Heart left ventricle (tissue), 16 donors: ENCODE measurements at regions of chr3 and their contacts with region 1.

Region 1: DNA sequence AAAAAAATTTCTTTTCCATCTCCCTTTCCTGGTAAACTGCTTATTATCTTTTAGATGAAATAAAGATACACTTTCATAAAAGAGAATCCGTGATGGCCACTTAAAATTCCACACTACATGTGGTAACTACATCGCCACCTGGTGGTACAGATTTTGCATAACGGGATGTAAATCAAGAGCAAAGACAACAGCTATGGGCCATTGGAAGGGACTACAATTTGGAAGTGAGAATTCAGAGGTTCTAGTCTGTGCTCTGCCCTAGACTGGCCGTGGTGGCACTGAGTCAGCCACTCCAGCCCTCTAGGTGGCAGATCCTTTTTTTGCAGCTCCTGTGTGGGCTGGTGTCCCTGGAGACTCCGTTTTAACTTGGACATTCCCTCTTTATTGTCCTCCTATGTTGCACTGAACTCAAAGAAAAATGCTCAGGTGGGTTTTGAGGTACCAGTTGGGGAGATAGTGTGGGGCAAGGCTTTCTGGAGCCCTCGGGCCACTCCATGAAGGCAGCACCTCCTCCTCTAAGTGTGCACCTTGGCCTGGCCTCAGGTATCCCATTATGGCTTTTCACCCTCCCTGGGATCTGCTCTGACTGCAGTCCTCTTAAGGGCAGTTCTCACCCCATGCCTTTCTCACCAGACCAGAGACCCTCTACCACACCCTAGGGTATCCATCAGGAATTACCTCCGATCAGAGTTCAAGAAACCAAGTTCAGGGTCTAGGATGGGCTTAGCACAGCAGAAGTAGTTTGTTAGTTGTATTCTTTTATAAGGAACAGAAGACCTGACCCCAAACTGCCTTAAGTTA is 54.9 kb downstream of the SPSB4 start:
- DNase-seq: peak in 3 of 5 donors; percentile 71 to 74 (median 72)
- ATAC-seq: no peak
- H3K4me3 ChIP-seq: no peak overlapping the region
- H3K27ac ChIP-seq: no peak overlapping the region
- H3K4me1 ChIP-seq: peaks cover 0 to 31% (median 6%) of the 10 kb centered on the region in 12 donors
- H3K27me3 ChIP-seq: no peaks in the 10 kb centered on the region
- CTCF ChIP-seq: peak; percentile 65 to 83 (median 78)
- POLR2A ChIP-seq: no peak

Region 2: GRCh38 chr3:140898340-140899180 is 207.5 kb before region 1 on chr3:
- intact Hi-C with region 1: loop called in 2 of 10 experiments (anchors 2 to 10 kb)
- DNase-seq: no peak
- ATAC-seq: peak; percentile 23 to 53 (median 36)
- H3K4me3 ChIP-seq: no peak overlapping the region
- H3K27ac ChIP-seq: no peak overlapping the region
- H3K4me1 ChIP-seq: peaks cover 0 to 5% (median 0%) of the 10 kb centered on the region in 12 donors
- H3K27me3 ChIP-seq: no peaks in the 10 kb centered on the region
- CTCF ChIP-seq: peak; percentile 33 to 63 (median 48)
- POLR2A ChIP-seq: no peak

Region 3: GRCh38 chr3:141000027-141000663 is 105.9 kb before region 1 on chr3:
- intact Hi-C with region 1: loop called in 1 of 10 experiments (anchors 5 kb)
- DNase-seq: peak; percentile 58 to 77 (median 68)
- ATAC-seq: peak; percentile 93 to 99 (median 96)
- H3K4me3 ChIP-seq: no peak overlapping the region
- H3K27ac ChIP-seq: no peak overlapping the region
- H3K4me1 ChIP-seq: no peaks in the 10 kb centered on the region
- H3K27me3 ChIP-seq: no peaks in the 10 kb centered on the region
- CTCF ChIP-seq: peak; percentile 59 to 83 (median 76)
- POLR2A ChIP-seq: no peak

Region 4: DNA sequence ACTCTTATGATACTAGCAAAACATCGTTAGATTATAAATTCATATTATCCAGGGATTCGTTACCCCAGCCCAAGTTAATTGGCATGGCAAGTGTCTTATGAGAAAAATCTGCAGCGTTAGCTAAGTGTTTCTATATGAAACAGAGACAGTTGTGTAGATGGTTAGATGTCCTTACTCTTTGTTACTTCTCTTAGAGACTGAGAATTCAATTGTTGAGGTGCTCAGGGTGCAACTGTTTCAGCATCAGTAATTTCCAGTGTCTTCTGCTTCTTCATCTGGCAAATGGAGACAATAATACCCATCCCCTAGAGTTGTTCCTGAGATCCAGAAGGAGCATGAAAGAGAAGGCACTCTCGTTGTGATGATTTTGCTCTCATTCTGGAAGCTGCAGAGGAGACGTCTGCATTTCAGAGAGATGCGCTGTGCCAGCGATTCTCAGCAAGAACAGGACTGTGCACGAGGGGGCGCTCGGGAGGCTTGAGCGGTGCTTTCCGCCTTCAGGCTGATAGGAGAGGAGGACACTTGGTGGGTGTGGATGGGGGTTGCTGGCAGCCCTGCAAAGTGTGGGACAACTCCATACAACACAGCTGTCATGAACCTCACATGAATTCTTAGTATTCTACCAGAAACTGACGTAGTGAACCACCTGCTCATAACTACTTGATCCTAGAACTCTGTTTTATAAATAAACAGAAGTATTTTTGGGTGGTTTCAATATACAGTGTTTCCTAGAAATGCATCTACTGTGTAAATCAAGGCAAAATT is 94.6 kb before region 1 on chr3:
- intact Hi-C with region 1: loop called in 9 of 10 experiments (anchors 1 to 5 kb)
- DNase-seq: peak; percentile 76 to 89 (median 82)
- ATAC-seq: peak; percentile 62 to 84 (median 76)
- H3K4me3 ChIP-seq: no peak overlapping the region
- H3K27ac ChIP-seq: no peak overlapping the region
- H3K4me1 ChIP-seq: peaks cover 0 to 6% (median 1%) of the 10 kb centered on the region in 12 donors
- H3K27me3 ChIP-seq: no peaks in the 10 kb centered on the region
- CTCF ChIP-seq: peak; percentile 57 to 87 (median 80)
- POLR2A ChIP-seq: no peak

Region 5: DNA sequence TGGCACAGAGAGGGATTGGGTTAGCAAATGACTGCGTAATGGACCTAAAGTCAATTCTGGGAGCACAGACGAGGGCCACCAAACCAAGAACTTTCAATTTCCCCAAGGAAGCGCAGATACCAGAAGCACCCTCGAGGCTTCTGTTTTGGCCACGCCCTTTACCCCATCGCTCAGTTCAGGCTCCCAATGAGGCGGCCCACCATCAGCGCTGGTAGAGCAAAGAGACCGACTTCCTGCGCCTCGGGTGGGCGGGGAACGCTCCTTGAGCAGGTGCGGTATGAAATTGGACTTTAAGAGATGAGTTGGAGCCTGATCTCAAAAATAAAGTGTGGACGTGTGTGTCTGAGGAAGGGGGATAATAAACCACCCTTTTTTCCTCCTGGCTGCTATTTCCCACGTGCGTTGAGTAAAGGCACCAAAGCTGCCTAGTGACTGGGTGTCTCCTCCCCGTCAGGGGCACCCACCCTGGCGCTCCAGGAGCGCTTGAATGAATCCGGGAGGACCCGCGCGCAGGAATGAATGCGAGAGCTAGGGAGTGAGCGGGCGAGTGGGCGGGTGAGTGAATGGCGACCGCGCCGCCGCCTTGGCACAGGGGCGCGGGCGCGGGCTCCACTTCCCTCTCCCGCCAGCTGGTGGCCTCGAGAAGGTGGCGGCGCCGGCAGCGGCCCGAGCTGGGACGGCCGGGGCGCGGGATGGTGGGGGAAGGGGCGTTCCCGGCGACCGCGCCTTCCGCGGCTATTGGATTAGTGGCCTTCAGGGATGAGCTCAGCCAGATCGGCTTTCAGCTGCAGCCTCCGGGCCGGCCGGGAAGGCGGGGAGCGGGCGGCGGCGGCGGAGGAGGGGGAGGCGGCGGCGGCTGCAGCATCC is 55.2 kb before region 1 on chr3 and contains the start of gene SPSB4:
- intact Hi-C with region 1: loop called (anchors 2 to 10 kb)
- DNase-seq: peak; percentile 75 to 88 (median 79)
- ATAC-seq: peak; percentile 77 to 92 (median 90)
- H3K4me3 ChIP-seq: peak within 1 kb of the TSS; percentile 52 to 72 (median 58)
- H3K27ac ChIP-seq: peak within 1 kb of the TSS; percentile 30 to 85 (median 72)
- H3K4me1 ChIP-seq: peaks cover 0 to 34% (median 8%) of the 10 kb centered on the region in 12 donors
- H3K27me3 ChIP-seq: peaks cover 0 to 45% (median 0%) of the 10 kb centered on the region in 9 donors
- CTCF ChIP-seq: peak; percentile 16 to 64 (median 46)
- POLR2A ChIP-seq: no peak
- total RNA-seq, gene SPSB4: 3.7 to 11.1 (median 4.8) TPM

Region 6: DNA sequence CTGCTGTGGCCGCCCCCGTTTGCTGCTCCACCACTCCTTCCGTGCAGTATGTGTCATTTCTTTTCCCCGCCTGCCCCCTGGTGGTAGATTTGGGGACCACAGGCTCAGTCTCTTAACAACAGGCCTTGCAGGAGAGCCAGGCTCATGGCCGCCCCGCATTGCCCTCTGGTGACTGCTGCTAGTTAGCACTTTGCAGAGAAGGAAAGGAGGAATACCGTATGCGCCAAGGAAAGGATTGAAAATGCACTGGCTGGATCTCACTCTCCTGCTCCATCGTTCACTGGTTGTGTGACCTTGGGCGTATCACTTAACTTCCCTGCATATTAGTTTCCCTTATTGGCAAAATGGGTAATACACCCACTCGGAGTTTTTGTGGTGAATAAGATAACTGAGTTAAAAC is 86.3 kb after region 1 on chr3:
- intact Hi-C with region 1: loop called in 9 of 10 experiments (anchors 5 kb)
- DNase-seq: peak; percentile 92 to 97 (median 94)
- ATAC-seq: peak; percentile 92 to 99 (median 99)
- H3K4me3 ChIP-seq: no peak overlapping the region
- H3K27ac ChIP-seq: no peak overlapping the region
- H3K4me1 ChIP-seq: peaks cover 0 to 2% (median 0%) of the 10 kb centered on the region in 12 donors
- H3K27me3 ChIP-seq: peaks cover 0 to 5% (median 0%) of the 10 kb centered on the region in 9 donors
- CTCF ChIP-seq: peak; percentile 96 to 100 (median 98)
- POLR2A ChIP-seq: no peak